Activated CD4-positive, alpha-beta memory T cell treated with anti-CD3 and anti-CD28 coated beads, Interleukin-2, amount 10 ng/mL, durations not matched to agents 7 days and 5 days (primary cell): ENCODE measurements at regions of chr20 and their contacts with region 1.

Region 1: DNA sequence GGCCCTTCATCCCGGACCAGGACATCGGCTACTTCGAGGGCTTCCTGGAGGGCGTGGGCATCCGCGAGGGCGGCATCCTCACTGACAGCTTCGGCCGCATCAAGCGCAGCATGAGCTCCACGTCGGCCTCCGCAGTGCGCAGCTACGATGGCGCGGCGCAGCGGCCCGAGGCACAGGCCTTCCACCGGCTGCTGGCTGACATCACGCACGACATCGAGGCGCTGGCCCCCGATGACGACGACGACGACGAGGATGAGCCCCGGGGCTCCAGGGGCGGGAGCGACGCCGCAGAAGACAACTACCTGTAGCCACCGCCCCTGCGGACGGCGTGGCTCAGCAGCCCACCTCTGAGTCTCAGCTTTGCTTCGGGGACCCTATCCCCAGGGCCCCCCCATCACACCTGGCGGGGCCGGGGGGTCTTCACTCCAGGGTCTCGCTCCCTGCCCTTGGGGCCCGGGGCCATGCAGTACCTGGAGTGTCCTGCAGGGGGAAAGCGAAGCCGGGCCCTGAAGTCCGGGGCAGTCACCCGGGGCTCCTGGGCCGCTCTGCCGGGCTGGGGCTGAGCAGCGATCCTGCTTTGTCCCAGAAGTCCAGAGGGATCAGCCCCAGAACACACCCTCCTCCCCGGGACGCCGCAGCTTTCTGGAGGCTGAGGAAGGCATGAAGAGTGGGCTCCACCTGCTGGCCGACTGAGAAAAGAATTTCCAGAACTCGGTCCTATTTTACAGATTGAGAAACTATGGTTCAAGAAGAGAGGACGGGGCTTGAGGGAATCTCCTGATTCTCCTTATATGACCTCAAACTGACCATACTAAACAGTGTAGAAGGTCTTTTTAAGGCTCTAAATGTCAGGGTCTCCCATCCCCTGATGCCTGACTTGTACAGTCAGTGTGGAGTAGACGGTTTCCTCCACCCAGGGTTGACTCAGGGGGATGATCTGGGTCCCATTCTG is 20.8 kb upstream of the HCK start:
- DNase-seq: peak; percentile 58
- H3K4me3 Mint-ChIP-seq: no peak overlapping the region
- H3K27ac Mint-ChIP-seq: no peak overlapping the region
- H3K4me1 Mint-ChIP-seq: no peaks in the 10 kb centered on the region
- H3K27me3 Mint-ChIP-seq: peaks cover 40% of the 10 kb centered on the region

Region 2: GRCh38 chr20:32018269-32019074 is 12.8 kb before region 1 on chr20:
- CTCF ChIA-PET with region 1: interaction called, 24 read pairs
- POLR2A ChIA-PET with region 1: no interaction called
- DNase-seq: peak; percentile 50
- H3K4me3 Mint-ChIP-seq: peak overlapping the region; percentile 68
- H3K27ac Mint-ChIP-seq: no peak overlapping the region
- H3K4me1 Mint-ChIP-seq: peaks cover 23% of the 10 kb centered on the region
- H3K27me3 Mint-ChIP-seq: peaks cover 70% of the 10 kb centered on the region

Region 3: GRCh38 chr20:32091888-32092346 is 60.6 kb after region 1 on chr20:
- CTCF ChIA-PET with region 1: interaction called, 28 read pairs
- POLR2A ChIA-PET with region 1: no interaction called
- DNase-seq: peak; percentile 80
- H3K4me3 Mint-ChIP-seq: no peak overlapping the region
- H3K27ac Mint-ChIP-seq: no peak overlapping the region
- H3K4me1 Mint-ChIP-seq: no peaks in the 10 kb centered on the region
- H3K27me3 Mint-ChIP-seq: peaks cover 15% of the 10 kb centered on the region